CD4-positive, alpha-beta T cell (primary cell): ENCODE measurements at regions of chr9 and their contacts with region 1.

Region 1: GRCh38 chr9:72428329-72428728 is 63.3 kb upstream of the ZFAND5 start:
- DNase-seq: no peak
- ATAC-seq: no peak
- H3K4me3 ChIP-seq: no peak overlapping the region
- H3K4me3 Mint-ChIP-seq: no peak overlapping the region
- H3K27ac ChIP-seq: no peak overlapping the region
- H3K27ac Mint-ChIP-seq: no peak overlapping the region
- H3K4me1 ChIP-seq: no peaks in the 10 kb centered on the region
- H3K4me1 Mint-ChIP-seq: no peaks in the 10 kb centered on the region
- H3K27me3 ChIP-seq: no peaks in the 10 kb centered on the region
- H3K27me3 Mint-ChIP-seq: no peaks in the 10 kb centered on the region
- CTCF ChIP-seq: no peak

Region 2: DNA sequence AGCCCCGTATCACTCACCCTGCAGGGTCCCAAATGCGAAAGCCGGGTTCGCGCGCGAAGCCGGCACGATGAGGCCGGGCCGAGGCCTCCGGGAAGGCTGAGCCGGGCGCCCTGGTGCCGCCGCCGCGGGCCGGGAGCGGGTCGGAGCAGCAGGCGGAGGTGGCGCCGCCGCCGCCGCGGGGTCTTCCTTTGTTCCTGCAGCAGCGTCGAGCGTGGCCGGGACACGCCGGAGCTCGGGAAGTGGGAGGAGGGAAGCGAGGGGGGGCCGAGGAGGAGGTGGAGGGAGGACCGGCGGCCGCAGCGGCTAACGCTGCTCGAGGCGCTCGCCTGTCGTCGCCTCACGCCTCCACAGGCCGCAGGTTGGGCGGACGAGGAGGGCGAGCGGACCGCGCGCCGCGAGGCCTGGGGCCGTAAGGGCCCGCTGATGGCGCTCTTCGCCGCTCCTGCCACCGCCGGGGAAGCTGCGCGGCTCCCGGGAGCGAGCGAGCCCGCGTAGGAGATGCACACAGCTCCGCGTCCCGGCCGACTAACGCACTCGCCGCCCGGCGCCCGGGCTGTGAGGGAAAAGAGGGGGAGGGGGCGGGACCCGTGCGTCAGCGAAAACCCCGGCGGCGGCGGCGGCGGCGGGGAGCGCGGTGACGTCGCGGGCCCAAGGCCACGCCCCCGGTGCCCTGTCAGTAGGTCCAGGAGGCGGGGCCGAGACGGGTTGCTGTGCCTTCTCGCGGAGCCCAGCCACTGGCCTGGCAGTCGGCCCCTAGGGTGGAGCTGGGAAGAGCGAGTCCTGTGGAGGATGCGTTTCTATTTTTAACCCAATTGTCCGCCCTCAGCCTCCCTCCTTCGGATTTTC is 63.4 kb before region 1 on chr9 and contains the start of gene ZFAND5:
- CTCF ChIA-PET with region 1: no interaction called
- POLR2A ChIA-PET with region 1: no interaction called
- intact Hi-C with region 1: no loop called
- DNase-seq: peak; percentile 87 to 99 (median 92)
- ATAC-seq: peak; percentile 77
- H3K4me3 ChIP-seq: peak within 1 kb of the TSS; percentile 90
- H3K4me3 Mint-ChIP-seq: peak within 1 kb of the TSS; percentile 99
- H3K27ac ChIP-seq: peak within 1 kb of the TSS; percentile 97 to 99
- H3K27ac Mint-ChIP-seq: peak within 1 kb of the TSS; percentile 99
- H3K4me1 ChIP-seq: peaks cover 16% of the 10 kb centered on the region
- H3K4me1 Mint-ChIP-seq: peaks cover 51% of the 10 kb centered on the region
- H3K27me3 ChIP-seq: no peaks in the 10 kb centered on the region
- H3K27me3 Mint-ChIP-seq: no peaks in the 10 kb centered on the region
- CTCF ChIP-seq: no peak
- total RNA-seq, gene ZFAND5: 368 TPM

Region 3: GRCh38 chr9:72473474-72474261 is 45.3 kb after region 1 on chr9:
- CTCF ChIA-PET with region 1: no interaction called
- POLR2A ChIA-PET with region 1: no interaction called
- intact Hi-C with region 1: loop called in 1 of 2 experiments (anchors 10 kb)
- DNase-seq: peak in 2 of 14 experiments; percentile 33 to 38
- ATAC-seq: no peak
- H3K4me3 ChIP-seq: no peak overlapping the region
- H3K4me3 Mint-ChIP-seq: no peak overlapping the region
- H3K27ac ChIP-seq: no peak overlapping the region
- H3K27ac Mint-ChIP-seq: no peak overlapping the region
- H3K4me1 ChIP-seq: peaks cover 5% of the 10 kb centered on the region
- H3K4me1 Mint-ChIP-seq: peaks cover 15% of the 10 kb centered on the region
- H3K27me3 ChIP-seq: no peaks in the 10 kb centered on the region
- H3K27me3 Mint-ChIP-seq: no peaks in the 10 kb centered on the region
- CTCF ChIP-seq: no peak